ENCODE measurements at regions of chr1 and their contacts with region 1.

Region 1: GRCh38 chr1:1374929-1375662 is at the start of gene AURKAIP1:
- DNase-seq: peak; percentile 100
- total RNA-seq, gene AURKAIP1: 210 and 263 TPM in 2 replicates

Region 2: DNA sequence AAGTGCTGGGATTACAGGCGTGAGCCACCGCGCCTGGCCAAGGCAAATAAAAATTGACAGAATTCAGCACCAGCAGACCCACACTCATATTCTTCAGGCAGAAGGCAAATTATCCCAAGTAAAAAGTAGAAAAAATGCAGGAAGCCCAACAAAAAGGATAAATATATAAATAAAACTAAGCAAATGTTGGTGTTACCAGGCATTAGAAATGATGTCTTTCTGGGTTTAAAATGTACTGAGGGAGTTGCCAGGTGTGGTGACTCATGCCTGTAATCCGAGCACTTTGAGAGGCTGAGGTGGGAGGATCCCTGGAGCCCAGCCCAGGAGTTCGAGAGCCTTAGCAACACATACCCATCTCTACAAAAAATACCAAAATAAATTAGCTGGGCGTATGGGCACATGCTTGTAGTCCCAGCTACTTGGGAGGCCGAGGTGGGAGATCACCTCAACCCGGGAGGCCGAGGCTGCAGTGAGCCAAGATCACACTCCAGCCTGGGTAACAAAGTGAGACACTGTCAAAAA is 56.9 kb before region 1 on chr1:
- in situ Hi-C with region 1: no loop called
- DNase-seq: peak; percentile 50

Region 3: DNA sequence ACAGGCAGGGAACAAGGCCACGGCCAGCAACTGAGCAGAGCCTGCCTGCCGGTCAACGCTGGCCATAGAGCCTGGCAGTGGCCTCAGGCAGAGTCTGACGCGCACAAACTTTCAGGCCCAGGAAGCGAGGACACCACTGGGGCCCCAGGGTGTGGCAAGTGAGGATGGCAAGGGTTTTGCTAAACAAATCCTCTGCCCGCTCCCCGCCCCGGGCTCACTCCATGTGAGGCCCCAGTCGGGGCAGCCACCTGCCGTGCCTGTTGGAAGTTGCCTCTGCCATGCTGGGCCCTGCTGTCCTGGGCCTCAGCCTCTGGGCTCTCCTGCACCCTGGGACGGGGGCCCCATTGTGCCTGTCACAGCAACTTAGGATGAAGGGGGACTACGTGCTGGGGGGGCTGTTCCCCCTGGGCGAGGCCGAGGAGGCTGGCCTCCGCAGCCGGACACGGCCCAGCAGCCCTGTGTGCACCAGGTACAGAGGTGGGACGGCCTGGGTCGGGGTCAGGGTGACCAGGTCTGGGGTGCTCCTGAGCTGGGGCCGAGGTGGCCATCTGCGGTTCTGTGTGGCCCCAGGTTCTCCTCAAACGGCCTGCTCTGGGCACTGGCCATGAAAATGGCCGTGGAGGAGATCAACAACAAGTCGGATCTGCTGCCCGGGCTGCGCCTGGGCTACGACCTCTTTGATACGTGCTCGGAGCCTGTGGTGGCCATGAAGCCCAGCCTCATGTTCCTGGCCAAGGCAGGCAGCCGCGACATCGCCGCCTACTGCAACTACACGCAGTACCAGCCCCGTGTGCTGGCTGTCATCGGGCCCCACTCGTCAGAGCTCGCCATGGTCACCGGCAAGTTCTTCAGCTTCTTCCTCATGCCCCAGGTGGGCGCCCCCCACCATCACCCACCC is 43.8 kb before region 1 on chr1 and contains the start of gene TAS1R3:
- in situ Hi-C with region 1: no loop called
- DNase-seq: no peak
- total RNA-seq, gene TAS1R3: 0.14 TPM in 1 of 2 replicates, not detected in the other

Region 4: GRCh38 chr1:1435106-1435903 is 60.2 kb after region 1 on chr1 and contains the start of gene VWA1:
- in situ Hi-C with region 1: loop called (anchors 10 kb)
- DNase-seq: no peak
- total RNA-seq, gene VWA1: 20.3 and 26.8 TPM in 2 replicates

Region 5: GRCh38 chr1:1567891-1568291 is 192.8 kb after region 1 on chr1:
- in situ Hi-C with region 1: loop called (anchors 10 kb)
- DNase-seq: no peak